Activated CD4-positive, alpha-beta T cell treated with anti-CD3 and anti-CD28 coated beads for 36 hours (primary cell): ENCODE measurements at regions of chr22 and their contacts with region 1.

Region 1: DNA sequence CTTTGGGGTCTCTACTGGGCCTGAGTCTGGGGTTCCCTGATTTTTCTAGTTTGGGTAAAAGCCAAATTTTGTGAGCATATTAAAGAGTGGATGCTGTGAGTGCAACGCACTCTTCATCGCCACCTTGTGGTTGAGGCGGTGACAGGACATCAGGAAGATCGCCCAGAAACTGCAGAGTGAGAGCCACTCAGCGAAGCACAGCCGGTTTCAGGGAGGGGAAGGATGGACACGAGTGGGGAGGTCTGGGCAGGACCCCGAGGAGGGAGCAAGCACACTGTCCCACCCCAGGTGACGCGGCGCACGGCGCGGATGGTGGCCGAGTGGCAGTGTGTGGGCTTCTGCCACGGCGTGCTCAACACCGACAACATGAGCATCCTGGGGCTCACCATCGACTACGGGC is 9.1 kb downstream of the SELENOO start:
- DNase-seq: peak; percentile 85
- ATAC-seq: peak; percentile 86
- H3K4me3 Mint-ChIP-seq: no peak overlapping the region
- H3K27ac Mint-ChIP-seq: no peak overlapping the region
- H3K4me1 Mint-ChIP-seq: peaks cover 5% of the 10 kb centered on the region
- H3K27me3 Mint-ChIP-seq: no peaks in the 10 kb centered on the region

Region 2: GRCh38 chr22:50101870-50102565 is 107.9 kb before region 1 on chr22:
- CTCF ChIA-PET with region 1: no interaction called
- POLR2A ChIA-PET with region 1: no interaction called
- intact Hi-C with region 1: no loop called
- DNase-seq: no peak
- ATAC-seq: no peak
- H3K4me3 Mint-ChIP-seq: no peak overlapping the region
- H3K27ac Mint-ChIP-seq: no peak overlapping the region
- H3K4me1 Mint-ChIP-seq: peaks cover 8% of the 10 kb centered on the region
- H3K27me3 Mint-ChIP-seq: peaks cover 8% of the 10 kb centered on the region

Region 3: GRCh38 chr22:50148991-50149721 is 60.7 kb before region 1 on chr22:
- CTCF ChIA-PET with region 1: interaction called, 13 read pairs
- POLR2A ChIA-PET with region 1: no interaction called
- intact Hi-C with region 1: loop called (anchors 1 kb)
- DNase-seq: peak; percentile 86
- ATAC-seq: peak; percentile 98
- H3K4me3 Mint-ChIP-seq: no peak overlapping the region
- H3K27ac Mint-ChIP-seq: no peak overlapping the region
- H3K4me1 Mint-ChIP-seq: no peaks in the 10 kb centered on the region
- H3K27me3 Mint-ChIP-seq: peaks cover 3% of the 10 kb centered on the region